PC-9 (cell line): ENCODE measurements at regions of chr15 and their contacts with region 1.

Region 1: DNA sequence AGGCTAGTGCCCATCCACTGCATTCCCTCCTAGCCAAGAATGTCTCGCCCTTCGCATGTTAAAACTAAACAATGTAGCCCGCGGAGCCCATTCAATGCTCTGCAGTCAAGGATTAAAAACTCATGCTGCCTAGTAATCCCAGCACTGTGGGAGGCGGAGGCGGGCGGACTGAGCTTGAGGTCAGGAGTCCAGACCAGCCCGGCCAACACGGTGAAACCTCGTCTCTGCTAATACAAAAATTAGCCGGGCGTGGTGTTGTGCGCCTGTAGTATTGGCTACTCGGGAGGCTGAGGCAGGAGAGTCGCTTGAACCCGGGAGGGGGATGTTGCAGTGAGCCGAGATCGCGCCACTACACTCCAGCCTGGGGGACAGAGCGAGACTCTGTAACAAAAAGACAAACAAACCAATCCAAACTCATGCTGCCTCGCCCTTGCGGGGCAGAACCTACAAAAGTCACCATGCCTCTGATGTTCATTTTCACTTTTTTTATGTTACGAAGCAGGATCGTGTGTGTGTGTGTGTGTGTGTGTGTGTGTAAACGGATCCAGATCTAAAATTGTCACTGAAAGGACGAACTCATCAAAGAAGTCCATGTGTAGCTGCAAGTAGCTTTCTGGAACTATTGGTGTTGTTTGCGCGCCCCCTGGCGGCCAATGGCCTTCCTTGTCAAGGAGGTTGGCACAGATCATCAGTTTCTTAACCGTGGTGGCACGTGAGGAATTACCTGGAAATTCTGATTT is 54.8 kb upstream of the SPESP1 start:
- DNase-seq: peak; percentile 70 to 83
- H3K4me3 ChIP-seq: no peak overlapping the region
- H3K27ac ChIP-seq: no peak overlapping the region
- H3K4me1 ChIP-seq: no peaks in the 10 kb centered on the region
- H3K27me3 ChIP-seq: no peaks in the 10 kb centered on the region
- CTCF ChIP-seq: peak; percentile 84

Region 2: GRCh38 chr15:68559345-68560310 is 315.9 kb before region 1 on chr15:
- CTCF ChIA-PET with region 1: interaction called, 10 read pairs
- POLR2A ChIA-PET with region 1: no interaction called
- intact Hi-C with region 1: loop called (anchors 1 kb)
- DNase-seq: peak in 1 of 2 experiments; percentile 80
- H3K4me3 ChIP-seq: peak overlapping the region; percentile 47; the same call in 1 of the 2 replicates
- H3K27ac ChIP-seq: no peak overlapping the region
- H3K4me1 ChIP-seq: no peaks in the 10 kb centered on the region
- H3K27me3 ChIP-seq: no peaks in the 10 kb centered on the region
- CTCF ChIP-seq: peak; percentile 90

Region 3: GRCh38 chr15:68730471-68730919 is 145.1 kb before region 1 on chr15:
- CTCF ChIA-PET with region 1: no interaction called
- POLR2A ChIA-PET with region 1: no interaction called
- intact Hi-C with region 1: loop called (anchors 1 kb)
- DNase-seq: peak in 1 of 2 experiments; percentile 21
- H3K4me3 ChIP-seq: no peak overlapping the region
- H3K27ac ChIP-seq: no peak overlapping the region
- H3K4me1 ChIP-seq: no peaks in the 10 kb centered on the region
- H3K27me3 ChIP-seq: no peaks in the 10 kb centered on the region
- CTCF ChIP-seq: peak; percentile 57

Region 4: GRCh38 chr15:68806220-68807060 is 69.1 kb before region 1 on chr15:
- CTCF ChIA-PET with region 1: no interaction called
- POLR2A ChIA-PET with region 1: no interaction called
- intact Hi-C with region 1: no loop called
- DNase-seq: no peak
- H3K4me3 ChIP-seq: no peak overlapping the region
- H3K27ac ChIP-seq: no peak overlapping the region
- H3K4me1 ChIP-seq: no peaks in the 10 kb centered on the region
- H3K27me3 ChIP-seq: no peaks in the 10 kb centered on the region
- CTCF ChIP-seq: no peak

Region 5: DNA sequence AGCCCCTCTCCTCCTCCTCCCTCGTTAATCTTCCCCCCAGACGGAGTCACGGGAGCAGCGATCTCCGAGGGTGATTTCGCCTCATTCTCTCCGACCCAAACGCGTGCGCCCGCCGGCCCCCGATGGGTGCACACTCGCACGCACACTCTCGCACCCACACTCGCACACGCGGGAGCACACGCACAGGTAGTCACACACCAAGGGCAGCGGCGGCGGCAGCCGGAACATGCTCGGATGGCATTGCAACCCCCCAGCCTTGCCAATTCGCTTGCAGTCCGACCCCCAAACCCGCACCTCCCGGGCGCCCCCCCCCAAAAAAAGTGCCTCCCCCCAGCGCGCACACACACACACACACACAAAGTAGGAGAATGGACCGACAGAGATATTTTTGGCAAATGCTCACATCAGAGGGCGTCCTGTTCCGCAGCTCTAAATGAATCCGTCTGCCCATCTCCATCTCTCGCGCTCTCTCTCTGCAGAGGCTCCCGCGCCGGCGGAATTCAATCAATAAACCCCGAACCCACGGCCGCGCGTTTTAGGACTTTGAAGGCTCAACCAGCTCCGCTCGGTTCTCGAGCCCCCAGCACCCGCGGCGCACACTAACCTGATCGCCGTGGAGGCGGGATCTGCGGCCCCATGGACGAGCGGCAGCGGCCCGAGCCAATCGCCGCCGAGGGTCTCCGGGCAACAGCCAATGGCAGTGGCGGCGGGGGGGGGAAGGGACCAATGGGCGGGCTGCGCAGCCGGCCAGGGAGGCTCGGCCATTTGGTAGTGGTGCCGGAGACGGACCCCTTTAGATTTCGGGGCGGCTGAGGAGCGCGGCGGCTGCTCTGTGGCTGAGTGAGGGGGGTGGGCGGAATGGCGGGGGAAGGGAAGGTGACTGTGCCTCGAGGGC is 55.0 kb before region 1 on chr15 and contains the start of gene ANP32A:
- CTCF ChIA-PET with region 1: no interaction called
- POLR2A ChIA-PET with region 1: no interaction called
- intact Hi-C with region 1: loop called (anchors 2 kb)
- DNase-seq: peak; percentile 76 to 97
- H3K4me3 ChIP-seq: peak within 1 kb of the TSS; percentile 89
- H3K27ac ChIP-seq: peak within 1 kb of the TSS; percentile 87
- H3K4me1 ChIP-seq: peaks cover 26% of the 10 kb centered on the region
- H3K27me3 ChIP-seq: no peaks in the 10 kb centered on the region
- CTCF ChIP-seq: no peak
- total RNA-seq, gene ANP32A: 151 and 182 TPM in 2 replicates